ENCODE measurements at regions of chr19 and their contacts with region 1.

Region 1: DNA sequence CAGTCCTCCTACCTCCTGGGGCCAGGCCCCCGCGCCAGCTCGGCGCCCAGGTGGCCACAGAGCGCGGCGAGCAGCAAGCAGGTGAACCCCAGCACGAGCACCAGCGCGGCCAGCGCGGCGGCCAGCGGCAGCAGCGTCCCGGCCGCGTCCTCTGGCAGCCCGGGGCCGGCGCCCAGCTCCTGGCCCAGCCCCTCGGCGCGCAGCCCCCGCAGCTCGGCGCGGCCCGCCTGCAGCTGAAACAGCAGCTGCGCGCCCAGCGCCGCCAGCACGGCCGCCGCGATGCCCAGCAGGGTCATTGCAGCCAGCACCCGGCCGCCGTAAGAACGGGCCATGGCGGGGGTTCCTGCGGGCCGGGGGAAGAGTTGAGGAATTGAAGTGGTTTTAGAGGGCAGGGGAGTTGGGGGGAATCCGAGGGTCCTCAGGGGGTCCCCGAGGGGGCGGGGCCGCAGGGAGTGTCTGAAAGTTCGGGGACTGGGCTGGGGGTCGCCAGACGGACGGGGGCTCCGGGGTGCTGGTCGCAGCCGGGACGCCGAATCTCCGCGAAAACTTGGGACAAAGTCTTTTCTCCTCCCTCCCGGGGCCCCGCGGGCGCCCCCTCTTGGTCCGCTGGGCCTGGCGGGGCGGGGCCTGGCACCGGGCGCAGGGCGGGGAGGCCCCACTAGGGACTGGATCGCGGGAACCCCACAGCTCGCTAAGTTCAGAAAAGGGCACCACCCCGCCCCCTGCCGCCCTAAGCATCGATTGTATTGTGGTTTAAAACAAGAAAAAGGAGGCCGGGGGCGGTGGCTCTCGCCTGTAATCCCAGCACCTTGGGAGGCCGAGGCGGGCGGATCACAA is at the start of gene TMEM221:
- DNase-seq: peak; percentile 55 to 66
- ATAC-seq: peak; percentile 78 to 88
- H3K4me3 ChIP-seq: peak within 1 kb of the TSS; percentile 50
- H3K27ac ChIP-seq: peak within 1 kb of the TSS; percentile 58 to 85
- H3K4me1 ChIP-seq: 0 out of 3 replicates have a peak, but pooled peaks cover 6% of the 10 kb centered on the region
- CTCF ChIP-seq: peak; percentile 47
- EP300 ChIP-seq: no peak
- POLR2A ChIP-seq: 0 out of 2 replicates have a peak, but pooled peaks have one; percentile 8
- RAD21 ChIP-seq: no peak
- polyA plus RNA-seq, gene TMEM221: 0.61 and 0.78 TPM in 2 replicates

Region 2: DNA sequence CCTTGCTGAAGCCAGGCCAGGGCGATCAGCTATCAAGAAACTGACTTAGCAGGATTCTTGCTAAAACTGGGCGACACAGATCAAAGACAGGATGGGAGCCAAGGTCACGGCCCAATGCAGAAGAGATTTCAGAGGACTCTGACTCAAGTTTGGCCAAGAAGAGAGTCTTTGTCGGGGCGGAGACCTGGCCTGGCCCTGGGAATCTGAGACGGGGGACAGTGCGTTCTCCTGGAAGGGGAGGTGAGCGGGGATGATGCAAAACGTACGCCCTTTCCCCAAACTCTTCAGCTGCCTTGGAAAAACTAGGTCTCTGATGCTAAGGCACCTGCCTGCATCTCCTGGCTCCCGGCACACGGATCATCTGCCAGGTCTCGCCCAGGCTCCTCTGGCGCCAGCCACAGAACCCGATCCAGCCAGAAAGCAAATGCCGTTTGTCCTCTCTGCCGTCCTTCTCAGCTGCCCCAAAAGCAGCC is 18.7 kb before region 1 on chr19:
- CTCF ChIA-PET with region 1: interaction called, 10 read pairs
- POLR2A ChIA-PET with region 1: interaction called, 3 read pairs
- DNase-seq: no peak
- ATAC-seq: no peak
- H3K4me3 ChIP-seq: no peak overlapping the region
- H3K27ac ChIP-seq: no peak overlapping the region
- H3K4me1 ChIP-seq: peaks cover 5% of the 10 kb centered on the region; the same call in 2 of the 3 replicates
- CTCF ChIP-seq: no peak
- EP300 ChIP-seq: no peak
- POLR2A ChIP-seq: no peak
- RAD21 ChIP-seq: no peak